ENCODE measurements at regions of chrX and their contacts with region 1.

Region 1: DNA sequence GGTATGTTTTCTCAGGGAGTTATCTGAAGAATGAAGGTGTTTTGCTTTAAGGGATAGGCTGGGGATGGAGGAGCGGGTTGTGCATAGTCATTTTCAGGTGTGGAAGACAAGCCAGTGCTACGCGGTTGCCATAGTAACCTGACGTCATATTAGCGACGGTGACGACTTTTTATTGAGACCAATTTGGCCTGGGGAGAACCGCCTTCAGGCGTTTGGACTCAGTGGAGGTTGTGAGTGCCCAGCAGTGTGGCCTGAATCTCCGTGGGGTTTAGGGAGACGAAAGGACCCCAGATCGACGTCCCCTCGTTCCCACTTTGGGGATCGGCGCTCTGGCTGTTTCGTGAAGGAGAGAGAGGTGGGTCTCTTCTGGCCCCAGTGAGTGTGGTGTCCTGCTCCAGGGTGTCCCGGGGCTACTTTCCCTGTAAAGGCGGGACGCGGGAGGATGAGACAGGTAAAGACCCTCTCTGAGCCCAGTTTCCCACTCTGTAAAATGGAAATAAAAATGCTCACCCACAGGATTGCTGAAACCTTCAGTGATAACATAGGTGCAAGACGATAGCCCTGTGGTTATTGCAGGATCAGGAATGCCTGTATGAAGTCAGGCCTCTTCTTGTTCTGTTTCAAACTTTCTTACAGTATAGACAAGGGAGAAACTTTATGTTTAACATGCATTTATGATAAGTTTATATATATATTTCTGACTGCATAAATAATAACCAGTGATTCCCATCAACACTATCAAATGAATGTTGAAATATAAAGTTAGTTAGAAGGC is 48.6 kb downstream of the GPRASP3 start:
- DNase-seq: peak; percentile 57
- ATAC-seq: peak; percentile 90
- H3K4me3 Mint-ChIP-seq: peak overlapping the region; percentile 98
- H3K27ac Mint-ChIP-seq: peak overlapping the region; percentile 92
- H3K4me1 Mint-ChIP-seq: peaks cover 13% of the 10 kb centered on the region
- H3K27me3 Mint-ChIP-seq: no peaks in the 10 kb centered on the region
- CTCF ChIP-seq: no peak

Region 2: GRCh38 chrX:101348452-101349192 is 1420.6 kb before region 1 on chrX and contains the start of gene TIMM8A:
- CTCF ChIA-PET with region 1: no interaction called
- POLR2A ChIA-PET with region 1: interaction called, 11 read pairs
- intact Hi-C with region 1: no loop called
- DNase-seq: peak; percentile 71
- ATAC-seq: peak; percentile 99
- H3K4me3 Mint-ChIP-seq: peak within 1 kb of the TSS; percentile 91
- H3K27ac Mint-ChIP-seq: peak within 1 kb of the TSS; percentile 89
- H3K4me1 Mint-ChIP-seq: peaks cover 13% of the 10 kb centered on the region
- H3K27me3 Mint-ChIP-seq: no peaks in the 10 kb centered on the region
- CTCF ChIP-seq: no peak
- total RNA-seq, gene TIMM8A: 16.8 and 17.1 TPM in 2 replicates

Region 3: GRCh38 chrX:102580891-102581290 is 188.3 kb before region 1 on chrX:
- CTCF ChIA-PET with region 1: no interaction called
- POLR2A ChIA-PET with region 1: no interaction called
- intact Hi-C with region 1: no loop called
- DNase-seq: no peak
- ATAC-seq: no peak
- H3K4me3 Mint-ChIP-seq: no peak overlapping the region
- H3K27ac Mint-ChIP-seq: no peak overlapping the region
- H3K4me1 Mint-ChIP-seq: no peaks in the 10 kb centered on the region
- H3K27me3 Mint-ChIP-seq: peaks cover 2% of the 10 kb centered on the region
- CTCF ChIP-seq: no peak

Region 4: GRCh38 chrX:102652031-102652688 is 117.0 kb before region 1 on chrX:
- CTCF ChIA-PET with region 1: no interaction called
- POLR2A ChIA-PET with region 1: interaction called, 13 read pairs
- intact Hi-C with region 1: loop called (anchors 5 kb)
- DNase-seq: no peak
- ATAC-seq: peak; percentile 63
- H3K4me3 Mint-ChIP-seq: peak overlapping the region; percentile 95
- H3K27ac Mint-ChIP-seq: peak overlapping the region; percentile 68
- H3K4me1 Mint-ChIP-seq: peaks cover 15% of the 10 kb centered on the region
- H3K27me3 Mint-ChIP-seq: no peaks in the 10 kb centered on the region
- CTCF ChIP-seq: no peak

Region 5: GRCh38 chrX:102672856-102673255 is 96.3 kb before region 1 on chrX:
- CTCF ChIA-PET with region 1: no interaction called
- POLR2A ChIA-PET with region 1: interaction called, 10 read pairs
- intact Hi-C with region 1: no loop called
- DNase-seq: no peak
- ATAC-seq: no peak
- H3K4me3 Mint-ChIP-seq: no peak overlapping the region
- H3K27ac Mint-ChIP-seq: no peak overlapping the region
- H3K4me1 Mint-ChIP-seq: peaks cover 2% of the 10 kb centered on the region
- H3K27me3 Mint-ChIP-seq: no peaks in the 10 kb centered on the region
- CTCF ChIP-seq: no peak

Region 6: DNA sequence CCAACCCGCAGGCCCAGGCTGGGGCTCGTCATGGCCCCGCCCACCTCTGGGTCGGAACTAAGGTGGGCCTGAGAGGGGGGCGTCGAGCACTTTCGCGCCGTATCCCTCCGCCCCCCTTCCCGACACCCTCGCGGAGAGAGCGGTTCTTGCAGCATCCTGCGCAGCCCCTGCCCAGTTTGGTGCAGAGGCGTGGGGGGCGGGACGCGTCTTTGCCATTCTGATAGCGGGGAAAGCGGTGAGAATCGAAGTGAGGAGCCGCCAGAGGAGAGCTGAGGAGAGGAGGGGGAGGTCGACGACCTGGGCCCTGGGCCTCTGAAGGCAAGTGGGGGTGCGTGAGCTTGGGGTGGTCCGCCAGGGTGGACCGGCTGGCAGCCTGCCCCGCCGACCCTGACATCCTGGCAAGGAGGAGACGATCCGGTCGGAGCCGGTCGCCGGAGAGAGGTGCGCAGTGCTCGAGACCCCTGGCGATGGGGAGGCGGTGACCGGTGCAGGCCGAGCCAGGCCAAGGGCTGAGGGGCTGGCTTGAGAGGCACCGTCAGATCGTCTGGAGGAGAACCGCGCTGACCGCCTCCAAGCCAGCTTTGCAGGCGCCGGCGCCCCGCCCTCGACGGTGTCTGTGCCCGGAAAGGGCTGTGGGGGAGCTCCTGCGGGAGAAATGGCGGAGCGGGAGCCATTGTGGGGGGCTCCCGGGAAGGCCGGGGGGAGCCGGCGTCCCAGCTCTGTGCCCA is 23.2 kb before region 1 on chrX:
- CTCF ChIA-PET with region 1: no interaction called
- POLR2A ChIA-PET with region 1: no interaction called
- intact Hi-C with region 1: loop called (anchors 2 kb)
- DNase-seq: no peak
- ATAC-seq: peak; percentile 31
- H3K4me3 Mint-ChIP-seq: peak overlapping the region; percentile 83
- H3K27ac Mint-ChIP-seq: no peak overlapping the region
- H3K4me1 Mint-ChIP-seq: no peaks in the 10 kb centered on the region
- H3K27me3 Mint-ChIP-seq: no peaks in the 10 kb centered on the region
- CTCF ChIP-seq: no peak

Region 7: DNA sequence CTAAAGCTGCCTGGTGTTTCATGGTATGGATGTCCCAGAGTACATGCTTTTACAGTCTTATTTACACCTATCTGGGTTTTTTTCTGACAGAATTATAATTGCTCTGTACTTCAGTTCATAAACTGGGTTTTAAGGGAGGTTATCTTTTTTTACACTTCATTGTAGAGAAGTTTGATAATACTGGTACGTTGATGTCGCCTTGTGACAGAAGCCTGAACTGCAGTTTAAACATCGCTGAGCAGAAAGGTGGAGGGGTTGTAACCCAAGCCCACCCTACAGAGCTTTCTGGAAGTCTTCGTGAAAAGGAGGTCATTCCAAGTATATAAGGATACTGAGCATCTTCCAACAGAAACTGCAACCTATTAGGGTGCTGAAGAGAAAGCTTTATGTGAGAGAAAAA is 248.4 kb after region 1 on chrX:
- CTCF ChIA-PET with region 1: no interaction called
- POLR2A ChIA-PET with region 1: no interaction called
- intact Hi-C with region 1: no loop called
- DNase-seq: no peak
- ATAC-seq: no peak
- H3K4me3 Mint-ChIP-seq: no peak overlapping the region
- H3K27ac Mint-ChIP-seq: no peak overlapping the region
- H3K4me1 Mint-ChIP-seq: no peaks in the 10 kb centered on the region
- H3K27me3 Mint-ChIP-seq: peaks cover 2% of the 10 kb centered on the region
- CTCF ChIP-seq: no peak